Activated naive CD4-positive, alpha-beta T cell treated with anti-CD3 and anti-CD28 coated beads for 36 hours (primary cell): ENCODE measurements at regions of chr3 and their contacts with region 1.

Region 1: GRCh38 chr3:88149509-88150362 is at the start of gene C3orf38:
- DNase-seq: peak; percentile 82
- H3K4me3 Mint-ChIP-seq: peak within 1 kb of the TSS; percentile 88
- H3K27ac Mint-ChIP-seq: peak within 1 kb of the TSS; percentile 98
- H3K4me1 Mint-ChIP-seq: peaks cover 29% of the 10 kb centered on the region
- H3K27me3 Mint-ChIP-seq: peaks cover 2% of the 10 kb centered on the region
- total RNA-seq, gene C3orf38: 16.0 to 16.7 TPM

Region 2: DNA sequence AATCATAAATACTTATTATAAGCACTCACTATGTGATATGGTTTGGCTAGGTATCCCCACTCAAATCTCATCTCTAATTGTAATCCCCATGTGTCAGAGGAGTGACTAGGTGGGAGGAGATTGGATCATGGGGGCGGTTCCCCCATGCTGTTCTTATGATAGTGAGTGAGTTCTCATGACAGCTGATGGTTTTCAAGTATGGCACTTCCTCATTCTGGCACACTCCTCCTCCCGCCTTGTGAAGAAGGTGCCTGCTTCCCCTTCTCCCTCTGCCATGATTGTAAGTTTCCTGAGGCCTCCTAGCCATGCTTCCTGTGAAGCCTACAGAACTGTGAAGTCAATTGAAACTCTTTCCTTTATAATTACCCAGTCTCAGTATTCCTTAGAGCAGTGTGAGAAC is 976.0 kb before region 1 on chr3:
- CTCF ChIA-PET with region 1: no interaction called
- intact Hi-C with region 1: no loop called
- DNase-seq: no peak
- H3K4me3 Mint-ChIP-seq: no peak overlapping the region
- H3K27ac Mint-ChIP-seq: no peak overlapping the region
- H3K4me1 Mint-ChIP-seq: no peaks in the 10 kb centered on the region
- H3K27me3 Mint-ChIP-seq: peaks cover 3% of the 10 kb centered on the region

Region 3: DNA sequence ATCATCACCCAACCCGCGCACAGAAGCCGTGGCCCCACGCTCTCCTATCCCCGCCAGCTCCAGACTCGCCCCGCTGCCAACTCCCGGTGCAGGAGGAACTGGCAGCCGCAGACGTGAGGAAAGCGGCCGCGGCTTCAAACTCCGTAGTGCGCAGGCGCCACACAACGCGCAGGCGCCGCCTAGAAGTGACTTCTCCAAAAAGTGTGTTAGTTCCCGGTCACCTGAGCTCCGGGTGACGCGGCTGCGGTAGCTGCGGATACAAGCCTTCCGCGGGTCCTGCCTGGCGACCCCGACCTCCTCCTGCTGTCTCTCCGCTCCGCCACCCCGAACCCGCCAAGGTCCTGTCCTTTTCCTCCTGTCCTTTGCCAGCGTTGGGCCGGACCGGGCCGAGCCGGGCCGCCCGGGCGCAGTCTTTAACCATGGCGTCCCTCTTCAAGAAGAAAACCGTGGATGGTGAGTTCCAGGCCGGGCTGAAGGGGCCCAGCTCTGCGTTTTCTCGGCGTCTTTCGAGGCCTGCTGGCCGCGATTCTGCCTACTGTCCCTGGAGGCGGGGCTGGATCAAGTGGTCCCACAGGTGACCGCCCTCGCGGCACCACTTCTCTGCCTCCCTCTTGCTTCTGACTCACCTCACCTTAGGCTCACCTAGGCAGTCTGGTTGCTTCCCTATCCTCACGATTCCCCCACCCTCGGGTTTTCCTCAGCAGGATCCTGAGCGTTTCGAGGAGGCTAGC is 922.5 kb before region 1 on chr3 and contains the start of gene CHMP2B:
- CTCF ChIA-PET with region 1: no interaction called
- intact Hi-C with region 1: loop called (anchors 1 kb)
- DNase-seq: peak; percentile 92
- H3K4me3 Mint-ChIP-seq: peak within 1 kb of the TSS; percentile 83
- H3K27ac Mint-ChIP-seq: peak within 1 kb of the TSS; percentile 85
- H3K4me1 Mint-ChIP-seq: peaks cover 31% of the 10 kb centered on the region
- H3K27me3 Mint-ChIP-seq: peaks cover 14% of the 10 kb centered on the region
- total RNA-seq, gene CHMP2B: 24.9 to 26.1 TPM

Region 4: DNA sequence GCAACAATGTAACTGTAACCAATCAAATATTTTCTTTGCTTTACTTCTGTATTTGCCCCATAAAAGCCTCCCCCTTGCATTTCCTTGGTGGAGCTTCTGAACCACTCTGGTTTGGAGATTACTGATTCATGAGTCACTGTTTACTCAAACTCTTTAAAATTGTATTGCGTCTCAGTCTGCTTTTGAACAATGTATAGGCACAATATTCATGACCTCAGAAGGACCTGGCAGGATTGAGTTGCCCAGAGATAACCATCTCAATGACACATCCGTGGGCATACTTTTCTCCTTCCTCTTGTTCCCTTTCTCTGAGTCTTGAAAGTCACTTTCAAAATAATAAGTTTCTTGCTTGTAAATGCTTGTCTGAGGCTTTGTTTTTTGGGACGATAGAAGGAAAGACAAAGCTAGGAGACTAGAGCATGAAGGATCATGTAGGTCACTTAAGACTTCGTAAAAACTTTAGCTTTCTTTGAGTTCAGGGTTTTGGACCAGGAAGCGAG is 816.3 kb before region 1 on chr3:
- CTCF ChIA-PET with region 1: no interaction called
- intact Hi-C with region 1: loop called (anchors 1 kb)
- DNase-seq: peak; percentile 49
- H3K4me3 Mint-ChIP-seq: no peak overlapping the region
- H3K27ac Mint-ChIP-seq: peak overlapping the region; percentile 82
- H3K4me1 Mint-ChIP-seq: peaks cover 17% of the 10 kb centered on the region
- H3K27me3 Mint-ChIP-seq: peaks cover 5% of the 10 kb centered on the region

Region 5: GRCh38 chr3:88031642-88032077 is 118.1 kb before region 1 on chr3:
- CTCF ChIA-PET with region 1: interaction called, 5 read pairs
- intact Hi-C with region 1: loop called (anchors 1 kb)
- DNase-seq: no peak
- H3K4me3 Mint-ChIP-seq: peak overlapping the region; percentile 77
- H3K27ac Mint-ChIP-seq: peak overlapping the region; percentile 72
- H3K4me1 Mint-ChIP-seq: peaks cover 25% of the 10 kb centered on the region
- H3K27me3 Mint-ChIP-seq: no peaks in the 10 kb centered on the region

Region 6: DNA sequence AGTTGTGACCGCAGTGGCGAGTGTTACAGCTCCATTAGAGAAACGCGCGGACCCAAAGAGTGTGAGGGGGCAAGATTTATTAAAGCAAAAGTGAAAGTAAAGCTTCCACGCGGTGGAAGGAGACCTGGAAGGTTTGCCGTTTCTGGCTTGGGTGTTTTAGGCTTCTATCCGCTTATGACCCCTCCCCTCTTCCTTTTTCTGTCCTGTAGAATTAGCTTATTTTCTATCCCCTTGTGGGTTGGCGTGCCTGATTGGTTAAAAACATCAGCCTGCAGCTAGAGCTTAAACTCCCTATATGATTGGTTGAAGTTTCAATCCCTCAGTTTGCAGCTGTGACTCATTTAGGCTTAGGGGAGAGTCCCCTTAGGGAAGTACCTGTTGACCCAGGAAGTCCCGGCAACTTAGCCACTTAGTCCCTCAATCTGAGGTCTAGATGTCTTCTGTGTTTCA is 39.6 kb after region 1 on chr3:
- CTCF ChIA-PET with region 1: no interaction called
- intact Hi-C with region 1: loop called (anchors 2 kb)
- DNase-seq: peak; percentile 27
- H3K4me3 Mint-ChIP-seq: no peak overlapping the region
- H3K27ac Mint-ChIP-seq: peak overlapping the region; percentile 28
- H3K4me1 Mint-ChIP-seq: peaks cover 9% of the 10 kb centered on the region
- H3K27me3 Mint-ChIP-seq: no peaks in the 10 kb centered on the region

Region 7: DNA sequence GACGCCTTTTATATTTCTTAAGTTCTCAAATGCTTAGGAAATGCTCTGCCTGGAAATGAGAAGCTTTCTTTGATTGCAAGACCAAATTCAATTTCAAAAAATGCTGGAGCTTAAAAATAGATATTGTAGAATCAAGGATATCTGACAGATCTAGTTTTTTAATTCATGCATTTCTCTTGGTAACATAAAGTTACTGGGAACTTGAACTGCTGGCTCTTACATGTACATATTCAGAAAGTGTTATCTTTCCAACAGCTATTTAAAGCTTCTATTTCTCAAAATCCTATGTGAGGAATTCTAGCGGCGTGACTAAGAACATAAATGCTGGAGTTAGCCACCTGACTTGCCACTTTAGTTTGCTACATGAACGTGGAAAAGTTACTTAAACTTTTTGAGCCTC is 109.3 kb after region 1 on chr3:
- CTCF ChIA-PET with region 1: no interaction called
- intact Hi-C with region 1: no loop called
- DNase-seq: no peak
- H3K4me3 Mint-ChIP-seq: no peak overlapping the region
- H3K27ac Mint-ChIP-seq: no peak overlapping the region
- H3K4me1 Mint-ChIP-seq: no peaks in the 10 kb centered on the region
- H3K27me3 Mint-ChIP-seq: no peaks in the 10 kb centered on the region

Region 8: DNA sequence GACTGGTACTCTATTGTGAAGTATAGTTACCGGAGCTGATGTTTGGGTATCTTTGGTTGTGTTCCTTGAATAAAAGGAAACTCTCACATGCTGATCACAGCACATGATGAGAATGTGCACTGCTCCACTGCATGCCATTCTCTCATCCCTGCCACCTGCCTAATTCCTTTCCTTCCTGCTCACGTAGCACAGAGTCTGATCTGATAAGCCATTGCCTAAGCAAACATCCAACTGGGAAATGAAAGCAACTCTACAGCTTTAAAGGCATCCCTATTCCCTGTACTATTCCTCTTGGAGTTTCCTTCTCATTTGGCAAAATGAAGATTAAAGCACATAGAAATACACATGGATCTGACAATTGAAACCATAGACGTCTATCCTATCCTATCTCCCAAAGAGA is 359.8 kb after region 1 on chr3:
- CTCF ChIA-PET with region 1: no interaction called
- intact Hi-C with region 1: no loop called
- DNase-seq: no peak
- H3K4me3 Mint-ChIP-seq: no peak overlapping the region
- H3K27ac Mint-ChIP-seq: no peak overlapping the region
- H3K4me1 Mint-ChIP-seq: no peaks in the 10 kb centered on the region
- H3K27me3 Mint-ChIP-seq: no peaks in the 10 kb centered on the region